Right lobe of liver (tissue), 6 donors: ENCODE measurements at regions of chr3 and their contacts with region 1.

Region 1: DNA sequence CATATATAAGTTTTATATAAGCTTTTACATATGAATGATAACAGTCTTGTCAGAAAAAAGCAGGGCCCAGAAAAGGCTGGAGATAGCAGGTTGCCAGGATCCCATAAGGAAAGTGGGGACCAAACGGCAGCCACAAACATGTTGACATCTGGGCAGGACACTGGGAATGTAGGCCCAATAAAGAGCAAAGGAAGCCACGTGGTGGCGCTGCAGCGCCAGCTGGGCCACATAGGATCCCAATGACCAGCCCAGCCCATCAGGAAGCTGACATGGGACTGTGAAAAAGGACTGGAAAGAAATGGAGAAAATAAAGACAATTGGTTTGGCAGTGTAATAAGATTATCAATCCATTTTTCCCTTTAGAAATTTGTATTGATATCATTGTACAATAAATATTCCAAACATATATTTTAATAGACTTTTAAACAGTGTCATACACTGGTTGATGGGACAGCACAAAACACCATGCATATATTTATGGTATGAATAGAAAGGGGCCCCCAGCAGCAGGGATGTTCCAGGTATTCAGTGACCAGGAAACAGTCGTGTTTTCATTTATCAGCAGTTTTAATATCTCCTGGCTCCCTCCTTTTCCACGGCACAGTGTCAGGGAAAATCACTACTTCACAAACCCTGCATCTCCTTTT is 89.0 kb upstream of the STRIT1 start:
- DNase-seq: peak; percentile 72 to 76 (median 75)
- ATAC-seq: peak; percentile 98 to 100 (median 98)
- H3K4me3 ChIP-seq: no peak overlapping the region
- H3K27ac ChIP-seq: no peak overlapping the region
- H3K4me1 ChIP-seq: no peaks in the 10 kb centered on the region
- H3K27me3 ChIP-seq: no peaks in the 10 kb centered on the region
- CTCF ChIP-seq: peak; percentile 68 to 78 (median 78)
- POLR2A ChIP-seq: no peak

Region 2: DNA sequence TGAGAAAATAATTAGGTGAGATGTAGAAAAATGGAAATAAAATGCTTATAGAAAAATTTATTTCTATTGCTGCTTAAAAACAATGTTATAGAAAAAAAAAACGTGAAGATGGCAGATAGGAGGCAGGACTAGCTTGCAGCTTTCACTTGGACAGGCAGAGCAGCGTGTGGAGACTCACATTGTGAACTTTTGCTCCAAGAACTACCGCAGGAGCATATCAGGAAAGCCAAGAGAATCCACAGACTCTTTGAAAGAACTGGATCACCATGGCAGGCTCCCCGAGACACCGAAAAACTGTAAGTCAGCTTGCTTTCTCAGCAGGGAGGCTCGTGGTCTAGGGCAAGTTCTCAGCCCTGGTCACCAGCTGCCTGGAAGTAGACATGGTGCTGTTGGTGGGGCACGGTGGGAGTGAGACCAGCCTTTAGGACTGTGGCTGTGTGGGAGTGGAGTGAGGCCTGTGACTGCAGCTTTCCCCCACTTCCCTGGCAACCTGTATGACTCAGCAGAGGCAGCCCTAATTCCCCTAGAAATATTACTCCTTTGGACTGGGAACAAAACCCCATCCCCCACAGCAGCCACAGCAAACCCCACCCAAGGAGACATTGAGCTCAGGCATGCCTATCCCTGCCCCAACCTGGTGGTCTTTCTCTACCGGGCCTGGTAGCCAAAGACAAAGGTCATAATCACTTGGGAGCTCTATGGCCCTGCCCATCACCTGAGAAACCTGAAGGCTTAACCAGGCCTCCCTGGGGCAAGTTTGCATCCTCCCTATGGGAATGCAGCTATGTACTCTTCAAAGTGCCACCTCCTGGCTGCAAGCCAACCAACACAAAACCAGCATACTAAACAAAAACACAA is 111.8 kb before region 1 on chr3:
- intact Hi-C with region 1: no loop called
- DNase-seq: no peak
- ATAC-seq: no peak
- H3K4me3 ChIP-seq: no peak overlapping the region
- H3K27ac ChIP-seq: no peak overlapping the region
- H3K4me1 ChIP-seq: no peaks in the 10 kb centered on the region
- H3K27me3 ChIP-seq: no peaks in the 10 kb centered on the region
- CTCF ChIP-seq: no peak
- POLR2A ChIP-seq: no peak

Region 3: GRCh38 chr3:155435821-155436220 is 53.3 kb after region 1 on chr3:
- intact Hi-C with region 1: no loop called
- DNase-seq: no peak
- ATAC-seq: no peak
- H3K4me3 ChIP-seq: no peak overlapping the region
- H3K27ac ChIP-seq: no peak overlapping the region
- H3K4me1 ChIP-seq: no peaks in the 10 kb centered on the region
- H3K27me3 ChIP-seq: no peaks in the 10 kb centered on the region
- CTCF ChIP-seq: no peak
- POLR2A ChIP-seq: no peak

Region 4: DNA sequence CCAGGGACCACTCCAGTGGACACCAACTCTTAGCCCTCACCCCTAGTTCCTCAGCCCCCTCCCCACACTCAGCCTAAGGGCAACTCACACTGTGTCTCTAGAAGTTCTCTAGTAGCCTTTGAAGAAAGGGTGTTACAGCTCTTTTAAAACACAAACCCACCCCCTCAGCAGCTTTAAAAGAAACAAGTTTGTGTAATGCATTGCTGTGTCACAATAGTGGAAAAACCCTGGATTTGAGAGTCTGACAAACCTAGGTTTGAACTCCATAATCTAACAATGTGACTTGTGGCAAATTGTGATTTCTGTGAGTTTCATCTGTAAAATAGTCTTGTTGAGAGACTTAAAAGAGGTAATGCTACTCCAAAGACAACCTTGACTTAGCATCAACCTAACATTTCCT is 308.4 kb after region 1 on chr3:
- intact Hi-C with region 1: loop called in 1 of 2 experiments (anchors 10 kb)
- DNase-seq: no peak
- ATAC-seq: peak in 1 of 4 donors; percentile 30
- H3K4me3 ChIP-seq: no peak overlapping the region
- H3K27ac ChIP-seq: no peak overlapping the region
- H3K4me1 ChIP-seq: no peaks in the 10 kb centered on the region
- H3K27me3 ChIP-seq: no peaks in the 10 kb centered on the region
- CTCF ChIP-seq: no peak
- POLR2A ChIP-seq: no peak

Region 5: GRCh38 chr3:155701882-155702465 is 319.5 kb after region 1 on chr3:
- intact Hi-C with region 1: loop called (anchors 10 kb)
- DNase-seq: no peak
- ATAC-seq: peak; percentile 67 to 82 (median 72)
- H3K4me3 ChIP-seq: no peak overlapping the region
- H3K27ac ChIP-seq: no peak overlapping the region
- H3K4me1 ChIP-seq: no peaks in the 10 kb centered on the region
- H3K27me3 ChIP-seq: no peaks in the 10 kb centered on the region
- CTCF ChIP-seq: peak; percentile 70 to 76 (median 73)
- POLR2A ChIP-seq: no peak